MCF 10A (cell line): ENCODE measurements at regions of chr1 and their contacts with region 1.

Region 1: GRCh38 chr1:219837274-219837993 is 90.9 kb downstream of the SLC30A10 start:
- DNase-seq: peak; percentile 85
- H3K4me3 Mint-ChIP-seq: no peak overlapping the region
- H3K27ac Mint-ChIP-seq: no peak overlapping the region
- H3K4me1 Mint-ChIP-seq: no peaks in the 10 kb centered on the region
- H3K27me3 Mint-ChIP-seq: peaks cover 95% of the 10 kb centered on the region
- CTCF ChIP-seq: peak; percentile 85

Region 2: GRCh38 chr1:219773775-219774174 is 63.7 kb before region 1 on chr1:
- CTCF ChIA-PET with region 1: no interaction called
- POLR2A ChIA-PET with region 1: no interaction called
- intact Hi-C with region 1: no loop called
- DNase-seq: no peak
- H3K4me3 Mint-ChIP-seq: no peak overlapping the region
- H3K27ac Mint-ChIP-seq: no peak overlapping the region
- H3K4me1 Mint-ChIP-seq: peaks cover 7% of the 10 kb centered on the region
- H3K27me3 Mint-ChIP-seq: no peaks in the 10 kb centered on the region
- CTCF ChIP-seq: no peak

Region 3: GRCh38 chr1:219824338-219824737 is 13.1 kb before region 1 on chr1:
- CTCF ChIA-PET with region 1: interaction called, 10 read pairs
- POLR2A ChIA-PET with region 1: no interaction called
- intact Hi-C with region 1: no loop called
- DNase-seq: no peak
- H3K4me3 Mint-ChIP-seq: no peak overlapping the region
- H3K27ac Mint-ChIP-seq: no peak overlapping the region
- H3K4me1 Mint-ChIP-seq: no peaks in the 10 kb centered on the region
- H3K27me3 Mint-ChIP-seq: peaks cover 46% of the 10 kb centered on the region
- CTCF ChIP-seq: no peak

Region 4: DNA sequence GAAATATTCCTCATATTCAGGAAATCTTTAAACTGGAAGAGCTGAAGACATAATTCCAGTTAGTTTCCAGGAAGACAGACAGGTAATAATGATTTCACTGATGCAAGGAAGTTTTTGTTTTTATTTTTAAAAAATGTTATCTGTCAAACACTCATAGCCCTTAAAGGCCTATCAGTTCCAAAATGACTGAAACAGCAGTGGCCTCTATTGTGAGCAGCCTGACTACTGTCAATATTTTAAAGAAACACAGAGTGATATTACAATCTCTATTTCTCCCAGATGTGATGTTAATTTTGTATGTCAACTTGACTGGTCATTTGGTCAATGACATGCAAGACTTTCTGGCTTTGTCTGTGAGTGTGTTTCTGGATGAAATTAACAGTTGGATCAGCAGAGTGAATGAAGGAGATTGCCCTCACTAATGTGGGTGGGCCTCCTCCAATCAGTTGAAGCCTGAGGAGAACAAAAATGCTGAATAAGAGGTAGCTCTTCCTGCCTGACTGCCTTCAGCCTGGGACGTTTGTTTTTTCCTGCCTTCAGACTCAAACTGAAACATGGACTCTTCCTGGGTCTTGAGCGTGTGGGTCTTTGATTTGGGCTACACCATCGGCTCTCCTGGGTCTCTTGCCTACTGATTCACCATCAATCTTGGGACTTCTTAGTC is 122.2 kb after region 1 on chr1:
- CTCF ChIA-PET with region 1: interaction called, 10 read pairs
- POLR2A ChIA-PET with region 1: interaction called, 3 read pairs
- intact Hi-C with region 1: no loop called
- DNase-seq: no peak
- H3K4me3 Mint-ChIP-seq: no peak overlapping the region
- H3K27ac Mint-ChIP-seq: no peak overlapping the region
- H3K4me1 Mint-ChIP-seq: no peaks in the 10 kb centered on the region
- H3K27me3 Mint-ChIP-seq: peaks cover 18% of the 10 kb centered on the region
- CTCF ChIP-seq: no peak

Region 5: GRCh38 chr1:220123889-220124288 is 286.5 kb after region 1 on chr1:
- CTCF ChIA-PET with region 1: no interaction called
- POLR2A ChIA-PET with region 1: no interaction called
- intact Hi-C with region 1: loop called (anchors 10 kb)
- DNase-seq: peak; percentile 43
- H3K4me3 Mint-ChIP-seq: no peak overlapping the region
- H3K27ac Mint-ChIP-seq: peak overlapping the region; percentile 5
- H3K4me1 Mint-ChIP-seq: peaks cover 10% of the 10 kb centered on the region
- H3K27me3 Mint-ChIP-seq: no peaks in the 10 kb centered on the region
- CTCF ChIP-seq: peak; percentile 39